Heart left ventricle (tissue), 16 donors: ENCODE measurements at regions of chr14 and their contacts with region 1.

Region 1: GRCh38 chr14:20757965-20758364 is 10.2 kb upstream of the EDDM3B start:
- DNase-seq: peak in 2 of 5 donors; percentile 28 to 33
- ATAC-seq: no peak
- H3K4me3 ChIP-seq: no peak overlapping the region
- H3K27ac ChIP-seq: no peak overlapping the region
- H3K4me1 ChIP-seq: peaks cover 0 to 7% (median 0%) of the 10 kb centered on the region in 12 donors
- H3K27me3 ChIP-seq: no peaks in the 10 kb centered on the region
- CTCF ChIP-seq: peak; percentile 32 to 60 (median 43)
- POLR2A ChIP-seq: no peak

Region 2: GRCh38 chr14:20179218-20179617 is 578.7 kb before region 1 on chr14:
- intact Hi-C with region 1: no loop called
- DNase-seq: peak in 1 of 5 donors; percentile 45
- ATAC-seq: peak; percentile 48 to 65 (median 56)
- H3K4me3 ChIP-seq: no peak overlapping the region
- H3K27ac ChIP-seq: peak overlapping the region in 1 of 12 donors; percentile 59
- H3K4me1 ChIP-seq: no peaks in the 10 kb centered on the region
- H3K27me3 ChIP-seq: no peaks in the 10 kb centered on the region
- CTCF ChIP-seq: no peak
- POLR2A ChIP-seq: no peak

Region 3: DNA sequence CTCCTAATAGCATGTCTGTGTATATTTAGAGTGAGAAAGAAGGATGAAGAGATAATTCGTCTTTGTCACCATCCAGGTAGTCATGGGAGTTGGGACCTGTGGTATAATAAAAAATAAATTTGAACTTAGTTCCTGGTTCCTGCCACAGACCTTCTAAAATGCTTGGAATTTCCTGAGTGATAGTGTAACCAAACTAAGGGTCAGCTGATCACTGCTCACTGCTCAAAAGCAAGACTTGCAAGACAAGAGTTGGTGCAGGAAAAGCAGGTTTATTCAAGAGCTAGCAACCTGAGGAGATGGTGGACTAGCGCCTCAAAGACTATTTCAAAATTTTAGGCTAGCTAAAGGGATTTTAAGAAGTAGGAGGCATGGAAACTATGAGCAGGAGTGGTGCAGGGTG is 50.3 kb before region 1 on chr14:
- intact Hi-C with region 1: loop called in 1 of 10 experiments (anchors 5 kb)
- DNase-seq: no peak
- ATAC-seq: no peak
- H3K4me3 ChIP-seq: no peak overlapping the region
- H3K27ac ChIP-seq: peak overlapping the region in 7 of 12 donors; percentile 1 to 71 (median 25)
- H3K4me1 ChIP-seq: peaks cover 0 to 15% (median 2%) of the 10 kb centered on the region in 12 donors
- H3K27me3 ChIP-seq: no peaks in the 10 kb centered on the region
- CTCF ChIP-seq: no peak
- POLR2A ChIP-seq: no peak

Region 4: GRCh38 chr14:20799892-20800544 is 42.1 kb after region 1 on chr14:
- intact Hi-C with region 1: loop called in 2 of 10 experiments (anchors 2 to 5 kb)
- DNase-seq: peak; percentile 54 to 75 (median 67)
- ATAC-seq: peak; percentile 56 to 80 (median 66)
- H3K4me3 ChIP-seq: peak overlapping the region in 11 of 12 donors; percentile 8 to 83 (median 61)
- H3K27ac ChIP-seq: peak overlapping the region; percentile 62 to 93 (median 84)
- H3K4me1 ChIP-seq: peaks cover 0 to 64% (median 23%) of the 10 kb centered on the region in 12 donors
- H3K27me3 ChIP-seq: no peaks in the 10 kb centered on the region
- CTCF ChIP-seq: no peak
- POLR2A ChIP-seq: no peak

Region 5: DNA sequence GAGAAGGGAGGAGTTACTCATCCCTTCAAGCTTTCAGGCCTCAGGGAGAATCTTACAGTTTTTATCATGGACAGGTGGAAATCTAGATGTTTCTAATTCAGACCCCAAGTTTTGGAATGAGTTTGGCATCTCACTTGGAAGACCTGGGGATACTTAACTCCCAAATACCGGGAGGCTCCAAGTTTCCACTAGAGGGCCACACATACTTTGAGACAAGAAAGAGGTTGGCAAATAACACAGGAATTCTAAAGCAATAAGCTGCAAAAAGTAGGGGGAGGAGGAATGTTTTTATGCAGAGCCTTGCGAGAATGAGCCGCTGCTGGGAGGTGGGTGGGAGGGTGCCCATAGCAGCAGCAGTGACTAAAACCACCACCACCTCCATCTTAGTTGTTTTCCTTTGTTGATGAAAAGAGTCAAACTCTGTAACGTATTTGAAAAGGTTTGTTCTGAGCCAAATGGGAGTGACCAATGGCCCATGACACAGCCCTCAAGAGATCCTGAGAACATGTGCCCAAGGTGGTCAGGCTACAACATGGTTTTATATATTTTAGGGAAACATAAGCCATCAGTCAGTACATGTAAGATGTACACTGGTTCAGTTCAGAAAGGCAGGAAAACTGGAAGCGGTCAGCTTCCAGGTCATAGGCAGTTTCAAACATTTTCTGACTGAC is 78.8 kb after region 1 on chr14:
- intact Hi-C with region 1: loop called in 1 of 10 experiments (anchors 10 kb)
- DNase-seq: no peak
- ATAC-seq: no peak
- H3K4me3 ChIP-seq: no peak overlapping the region
- H3K27ac ChIP-seq: no peak overlapping the region
- H3K4me1 ChIP-seq: peaks cover 0 to 4% (median 0%) of the 10 kb centered on the region in 12 donors
- H3K27me3 ChIP-seq: no peaks in the 10 kb centered on the region
- CTCF ChIP-seq: peak in 9 of 12 donors; percentile 6 to 49 (median 29)
- POLR2A ChIP-seq: no peak

Region 6: DNA sequence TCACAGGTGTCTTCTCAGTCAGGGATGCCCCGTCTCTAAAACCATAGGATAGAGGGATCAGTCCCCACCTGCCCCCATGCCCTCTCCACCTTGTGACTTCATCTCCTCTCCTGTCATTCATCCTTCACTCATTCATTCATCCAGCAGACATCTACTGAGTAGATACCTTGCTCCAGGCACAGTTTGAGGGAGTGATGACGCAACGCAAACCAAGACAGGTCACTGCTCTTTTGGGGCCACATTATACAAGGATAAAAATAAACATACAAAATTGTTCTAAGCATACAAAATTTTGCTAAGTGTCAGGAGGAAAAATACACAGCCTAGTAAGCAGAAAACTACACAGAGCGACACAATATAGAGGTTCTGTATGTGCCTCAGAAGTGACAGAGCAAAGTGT is 164.5 kb after region 1 on chr14:
- intact Hi-C with region 1: no loop called
- DNase-seq: no peak
- ATAC-seq: no peak
- H3K4me3 ChIP-seq: no peak overlapping the region
- H3K27ac ChIP-seq: no peak overlapping the region
- H3K4me1 ChIP-seq: no peaks in the 10 kb centered on the region
- H3K27me3 ChIP-seq: peaks cover 0 to 5% (median 0%) of the 10 kb centered on the region in 9 donors
- CTCF ChIP-seq: no peak
- POLR2A ChIP-seq: no peak